ENCODE measurements at regions of chr17 and their contacts with region 1.

Region 1: GRCh38 chr17:13594762-13595598 is 6.7 kb downstream of the HS3ST3A1 start:
- DNase-seq: peak; percentile 76 to 84 (median 80)
- H3K4me3 ChIP-seq: no peak overlapping the region
- H3K4me3 Mint-ChIP-seq: no peak overlapping the region
- H3K27ac ChIP-seq: no peak overlapping the region
- H3K27ac Mint-ChIP-seq: no peak overlapping the region
- H3K4me1 ChIP-seq: no peaks in the 10 kb centered on the region
- H3K4me1 Mint-ChIP-seq: peaks cover 3 to 9% (median 6%) of the 10 kb centered on the region in 4 donors
- H3K27me3 ChIP-seq: peaks cover 21% of the 10 kb centered on the region
- H3K27me3 Mint-ChIP-seq: peaks cover 13 to 17% of the 10 kb centered on the region in 2 donors

Region 2: DNA sequence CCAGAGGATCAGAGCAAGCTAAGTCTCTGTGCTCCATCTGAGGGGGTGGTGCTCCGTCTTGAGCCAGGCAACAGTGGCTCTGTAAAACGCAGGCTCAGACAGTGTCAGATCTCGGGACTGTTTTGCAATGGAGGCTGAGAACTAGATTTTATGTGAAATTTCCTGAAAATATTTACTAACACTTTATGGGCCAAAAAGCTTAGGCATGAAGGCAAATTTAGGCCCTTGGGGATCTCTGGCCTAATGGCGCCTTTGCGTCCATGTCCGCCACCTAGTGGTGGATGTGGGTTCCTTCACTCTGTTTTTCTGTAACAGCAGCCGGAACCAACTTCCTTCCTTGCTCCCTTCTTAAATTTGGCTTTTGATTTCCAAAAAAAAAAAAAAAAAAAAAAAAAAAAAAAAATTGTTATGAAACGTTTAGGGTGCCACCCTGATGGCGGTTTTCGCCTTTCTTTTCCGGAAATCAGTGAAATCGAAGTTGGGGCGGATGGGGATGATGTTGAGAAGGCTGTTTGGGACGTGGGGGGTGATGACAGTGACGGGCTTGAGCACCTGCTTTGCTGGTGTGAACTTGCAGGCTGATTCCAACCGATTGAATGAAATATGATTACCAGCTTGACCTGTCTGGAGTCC is 563.1 kb before region 1 on chr17:
- CTCF ChIA-PET with region 1: interaction called, 3 read pairs
- POLR2A ChIA-PET with region 1: no interaction called
- intact Hi-C with region 1: loop called (anchors 2 kb)
- DNase-seq: peak in 4 of 5 donors; percentile 37 to 53 (median 49)
- H3K4me3 ChIP-seq: no peak overlapping the region
- H3K4me3 Mint-ChIP-seq: peak overlapping the region in 6 of 8 donors; percentile 27 to 73 (median 45)
- H3K27ac ChIP-seq: no peak overlapping the region
- H3K27ac Mint-ChIP-seq: peak overlapping the region in 6 of 7 donors; percentile 25 to 73 (median 55)
- H3K4me1 ChIP-seq: peaks cover 4% of the 10 kb centered on the region
- H3K4me1 Mint-ChIP-seq: peaks cover 12 to 17% (median 13%) of the 10 kb centered on the region in 4 donors
- H3K27me3 ChIP-seq: no peaks in the 10 kb centered on the region
- H3K27me3 Mint-ChIP-seq: peaks cover 3 to 7% of the 10 kb centered on the region in 2 donors

Region 3: DNA sequence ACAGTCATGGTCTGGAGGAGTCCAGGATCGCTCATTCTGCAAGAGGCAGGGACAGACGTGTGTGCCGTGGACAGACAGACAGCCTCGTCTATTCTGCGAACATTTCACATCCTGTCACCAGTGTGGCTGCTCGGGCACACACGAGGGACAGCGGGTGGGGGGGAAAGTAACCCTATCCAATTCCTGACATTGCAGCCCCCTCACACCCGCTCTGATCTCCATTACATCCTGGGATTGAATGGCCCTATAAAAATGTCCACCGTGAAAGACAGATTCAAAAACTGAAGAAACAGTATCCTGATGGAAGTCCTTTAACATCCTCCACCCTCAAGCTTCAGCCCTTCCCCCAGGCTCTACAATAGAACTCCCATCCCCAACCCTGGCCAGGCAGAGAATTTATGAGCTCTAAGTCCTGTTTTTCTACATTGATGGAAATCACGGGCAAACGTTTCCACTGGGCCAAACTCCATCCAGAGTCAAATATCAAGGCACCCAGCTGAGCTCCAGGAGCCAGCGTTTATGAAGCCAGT is 32.6 kb before region 1 on chr17:
- CTCF ChIA-PET with region 1: no interaction called
- POLR2A ChIA-PET with region 1: no interaction called
- intact Hi-C with region 1: no loop called
- DNase-seq: no peak
- H3K4me3 ChIP-seq: no peak overlapping the region
- H3K4me3 Mint-ChIP-seq: no peak overlapping the region
- H3K27ac ChIP-seq: no peak overlapping the region
- H3K27ac Mint-ChIP-seq: no peak overlapping the region
- H3K4me1 ChIP-seq: no peaks in the 10 kb centered on the region
- H3K4me1 Mint-ChIP-seq: peaks cover 6 to 13% (median 10%) of the 10 kb centered on the region in 4 donors
- H3K27me3 ChIP-seq: no peaks in the 10 kb centered on the region
- H3K27me3 Mint-ChIP-seq: peaks cover 2% of the 10 kb centered on the region in 2 donors

Region 4: GRCh38 chr17:14069251-14070021 is 474.5 kb after region 1 on chr17 and contains the start of gene COX10:
- CTCF ChIA-PET with region 1: interaction called, 4 read pairs
- POLR2A ChIA-PET with region 1: no interaction called
- intact Hi-C with region 1: loop called (anchors 10 kb)
- DNase-seq: peak; percentile 75 to 86 (median 78)
- H3K4me3 ChIP-seq: peak within 1 kb of the TSS; percentile 96 to 98
- H3K4me3 Mint-ChIP-seq: peak within 1 kb of the TSS; percentile 93 to 96 (median 95)
- H3K27ac ChIP-seq: peak within 1 kb of the TSS; percentile 71
- H3K27ac Mint-ChIP-seq: peak within 1 kb of the TSS; percentile 89 to 95 (median 95)
- H3K4me1 ChIP-seq: peaks cover 30% of the 10 kb centered on the region
- H3K4me1 Mint-ChIP-seq: peaks cover 34 to 59% (median 46%) of the 10 kb centered on the region in 4 donors
- H3K27me3 ChIP-seq: no peaks in the 10 kb centered on the region
- H3K27me3 Mint-ChIP-seq: no peaks in the 10 kb centered on the region
- total RNA-seq, gene COX10: 16.9 to 17.6 TPM

Region 5: DNA sequence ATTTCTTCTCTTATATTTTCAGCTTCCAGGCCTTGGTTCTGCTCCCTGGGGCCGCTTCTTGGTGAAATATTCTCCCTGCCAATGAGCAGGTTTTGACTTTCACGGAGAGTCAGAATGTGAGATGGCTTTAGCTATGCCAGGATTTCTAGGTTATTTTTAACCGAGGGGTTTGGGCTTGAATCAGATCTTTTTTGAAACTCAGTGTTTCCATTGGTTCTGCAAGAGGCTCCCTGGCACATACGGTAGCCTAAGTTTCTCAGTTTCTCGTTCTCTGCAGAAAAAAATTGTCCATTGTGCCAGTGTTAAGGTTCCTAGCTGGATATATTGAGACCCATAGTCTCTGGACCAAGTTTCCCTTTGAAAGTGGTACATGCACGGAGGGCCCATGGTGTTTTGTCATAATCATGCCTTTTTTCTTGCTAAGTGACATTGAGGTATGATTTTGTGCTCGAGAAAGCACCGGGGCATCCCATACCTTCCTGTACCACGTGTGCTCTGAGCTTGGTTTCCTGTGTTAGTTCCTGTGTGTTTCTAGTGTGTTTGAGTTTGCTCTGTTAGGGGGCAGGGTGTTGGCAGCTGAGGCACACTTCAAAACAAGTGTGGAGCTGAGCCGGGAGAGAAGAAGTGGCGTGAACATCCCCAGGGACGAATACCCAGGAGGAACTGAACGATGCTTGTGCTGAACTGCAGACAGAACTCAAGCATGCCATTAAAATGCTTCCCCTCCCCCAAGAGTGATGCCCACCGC is 833.1 kb after region 1 on chr17:
- CTCF ChIA-PET with region 1: no interaction called
- POLR2A ChIA-PET with region 1: no interaction called
- intact Hi-C with region 1: loop called (anchors 2 kb)
- DNase-seq: peak; percentile 65 to 73 (median 69)
- H3K4me3 ChIP-seq: peak overlapping the region in 1 of 2 donors; percentile 39
- H3K4me3 Mint-ChIP-seq: peak overlapping the region; percentile 79 to 93 (median 86)
- H3K27ac ChIP-seq: peak overlapping the region; percentile 45
- H3K27ac Mint-ChIP-seq: peak overlapping the region; percentile 54 to 92 (median 88)
- H3K4me1 ChIP-seq: peaks cover 51% of the 10 kb centered on the region
- H3K4me1 Mint-ChIP-seq: peaks cover 48 to 62% (median 57%) of the 10 kb centered on the region in 4 donors
- H3K27me3 ChIP-seq: no peaks in the 10 kb centered on the region
- H3K27me3 Mint-ChIP-seq: no peaks in the 10 kb centered on the region

Region 6: DNA sequence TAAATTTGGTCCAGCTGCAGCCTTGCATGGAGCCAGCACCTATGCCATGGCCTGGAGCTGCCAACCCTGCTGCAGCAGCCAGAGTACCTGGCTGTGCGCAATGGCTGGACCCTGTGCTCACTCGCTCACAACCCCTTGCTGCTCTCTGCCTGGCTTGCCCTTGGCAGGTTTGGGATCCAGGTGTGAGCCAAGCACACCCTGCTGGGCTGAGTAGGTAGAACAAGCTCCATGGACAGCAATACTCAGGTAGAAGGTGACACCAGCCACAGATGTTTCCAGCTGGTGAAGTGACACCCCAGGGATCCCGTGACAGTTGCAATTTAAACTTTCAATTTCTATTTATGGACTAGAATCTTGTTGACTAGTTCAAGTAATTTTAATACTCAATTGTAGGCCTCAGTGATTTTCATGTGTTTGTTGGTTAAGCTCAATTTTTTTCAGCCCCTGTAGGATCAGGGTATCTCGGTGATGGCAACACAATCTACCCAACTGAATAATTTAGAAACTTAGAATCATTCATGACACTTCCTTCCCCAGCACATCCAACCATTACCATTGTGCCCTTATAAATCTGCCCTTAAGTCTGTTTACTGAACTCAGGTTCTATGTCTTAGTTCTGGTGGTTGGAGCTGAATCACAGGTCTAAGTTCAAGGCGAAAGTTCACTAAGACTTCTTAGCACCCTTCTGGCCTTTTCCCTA is 1190.2 kb after region 1 on chr17:
- CTCF ChIA-PET with region 1: interaction called, 10 read pairs
- POLR2A ChIA-PET with region 1: no interaction called
- intact Hi-C with region 1: loop called (anchors 1 kb)
- DNase-seq: peak in 4 of 5 donors; percentile 25 to 29 (median 28)
- H3K4me3 ChIP-seq: no peak overlapping the region
- H3K4me3 Mint-ChIP-seq: no peak overlapping the region
- H3K27ac ChIP-seq: no peak overlapping the region
- H3K27ac Mint-ChIP-seq: no peak overlapping the region
- H3K4me1 ChIP-seq: no peaks in the 10 kb centered on the region
- H3K4me1 Mint-ChIP-seq: no peaks in the 10 kb centered on the region
- H3K27me3 ChIP-seq: no peaks in the 10 kb centered on the region
- H3K27me3 Mint-ChIP-seq: peaks cover 3 to 14% of the 10 kb centered on the region in 2 donors

Region 7: GRCh38 chr17:14926526-14927122 is 1331.6 kb after region 1 on chr17:
- CTCF ChIA-PET with region 1: interaction called, 49 read pairs
- POLR2A ChIA-PET with region 1: no interaction called
- intact Hi-C with region 1: loop called (anchors 1 kb)
- DNase-seq: peak; percentile 48 to 55 (median 52)
- H3K4me3 ChIP-seq: no peak overlapping the region
- H3K4me3 Mint-ChIP-seq: no peak overlapping the region
- H3K27ac ChIP-seq: no peak overlapping the region
- H3K27ac Mint-ChIP-seq: no peak overlapping the region
- H3K4me1 ChIP-seq: no peaks in the 10 kb centered on the region
- H3K4me1 Mint-ChIP-seq: no peaks in the 10 kb centered on the region
- H3K27me3 ChIP-seq: no peaks in the 10 kb centered on the region
- H3K27me3 Mint-ChIP-seq: peaks cover 6 to 7% of the 10 kb centered on the region in 2 donors